Activated B cell treated with CpG ODN at 0.5 μM for 24 hours (primary cell): ENCODE measurements at regions of chr1 and their contacts with region 1.

Region 1: GRCh38 chr1:167499664-167500101 is 18.6 kb downstream of the CD247 start:
- DNase-seq: peak; percentile 31
- ATAC-seq: peak; percentile 96
- H3K4me3 Mint-ChIP-seq: peak overlapping the region; percentile 64
- H3K27ac Mint-ChIP-seq: peak overlapping the region; percentile 59
- H3K4me1 Mint-ChIP-seq: peaks cover 38% of the 10 kb centered on the region
- H3K27me3 Mint-ChIP-seq: peaks cover 67% of the 10 kb centered on the region
- CTCF ChIP-seq: no peak

Region 2: GRCh38 chr1:166796620-166797236 is 703.0 kb before region 1 on chr1:
- CTCF ChIA-PET with region 1: no interaction called
- POLR2A ChIA-PET with region 1: no interaction called
- intact Hi-C with region 1: no loop called
- DNase-seq: no peak
- ATAC-seq: no peak
- H3K4me3 Mint-ChIP-seq: no peak overlapping the region
- H3K27ac Mint-ChIP-seq: no peak overlapping the region
- H3K4me1 Mint-ChIP-seq: no peaks in the 10 kb centered on the region
- H3K27me3 Mint-ChIP-seq: peaks cover 19% of the 10 kb centered on the region
- CTCF ChIP-seq: no peak

Region 3: GRCh38 chr1:167207940-167208623 is 291.6 kb before region 1 on chr1:
- CTCF ChIA-PET with region 1: no interaction called
- POLR2A ChIA-PET with region 1: no interaction called
- intact Hi-C with region 1: no loop called
- DNase-seq: no peak
- ATAC-seq: no peak
- H3K4me3 Mint-ChIP-seq: no peak overlapping the region
- H3K27ac Mint-ChIP-seq: no peak overlapping the region
- H3K4me1 Mint-ChIP-seq: peaks cover 7% of the 10 kb centered on the region
- H3K27me3 Mint-ChIP-seq: no peaks in the 10 kb centered on the region
- CTCF ChIP-seq: no peak

Region 4: GRCh38 chr1:167430134-167430856 is 69.4 kb before region 1 on chr1:
- CTCF ChIA-PET with region 1: no interaction called
- POLR2A ChIA-PET with region 1: interaction called, 4 read pairs
- intact Hi-C with region 1: loop called (anchors 1 kb)
- DNase-seq: no peak
- ATAC-seq: peak; percentile 35
- H3K4me3 Mint-ChIP-seq: peak overlapping the region; percentile 61
- H3K27ac Mint-ChIP-seq: peak overlapping the region; percentile 90
- H3K4me1 Mint-ChIP-seq: peaks cover 53% of the 10 kb centered on the region
- H3K27me3 Mint-ChIP-seq: no peaks in the 10 kb centered on the region
- CTCF ChIP-seq: no peak

Region 5: GRCh38 chr1:167447521-167448136 is 52.1 kb before region 1 on chr1:
- CTCF ChIA-PET with region 1: no interaction called
- POLR2A ChIA-PET with region 1: no interaction called
- intact Hi-C with region 1: loop called (anchors 2 kb)
- DNase-seq: no peak
- ATAC-seq: peak; percentile 94
- H3K4me3 Mint-ChIP-seq: peak overlapping the region; percentile 61
- H3K27ac Mint-ChIP-seq: peak overlapping the region; percentile 70
- H3K4me1 Mint-ChIP-seq: peaks cover 25% of the 10 kb centered on the region
- H3K27me3 Mint-ChIP-seq: no peaks in the 10 kb centered on the region
- CTCF ChIP-seq: no peak

Region 6: GRCh38 chr1:167454894-167455785 is 44.5 kb before region 1 on chr1:
- CTCF ChIA-PET with region 1: interaction called, 3 read pairs
- POLR2A ChIA-PET with region 1: interaction called, 19 read pairs
- intact Hi-C with region 1: loop called (anchors 1 kb)
- DNase-seq: peak; percentile 60
- ATAC-seq: peak; percentile 76
- H3K4me3 Mint-ChIP-seq: peak overlapping the region; percentile 78
- H3K27ac Mint-ChIP-seq: no peak overlapping the region
- H3K4me1 Mint-ChIP-seq: peaks cover 18% of the 10 kb centered on the region
- H3K27me3 Mint-ChIP-seq: peaks cover 4% of the 10 kb centered on the region
- CTCF ChIP-seq: no peak

Region 7: GRCh38 chr1:167477986-167478385 is 21.7 kb before region 1 on chr1:
- CTCF ChIA-PET with region 1: no interaction called
- POLR2A ChIA-PET with region 1: no interaction called
- intact Hi-C with region 1: loop called (anchors 2 kb)
- DNase-seq: no peak
- ATAC-seq: no peak
- H3K4me3 Mint-ChIP-seq: no peak overlapping the region
- H3K27ac Mint-ChIP-seq: no peak overlapping the region
- H3K4me1 Mint-ChIP-seq: no peaks in the 10 kb centered on the region
- H3K27me3 Mint-ChIP-seq: peaks cover 27% of the 10 kb centered on the region
- CTCF ChIP-seq: no peak

Region 8: GRCh38 chr1:167553136-167554027 is 53.7 kb after region 1 on chr1 and contains the start of gene CREG1:
- CTCF ChIA-PET with region 1: interaction called, 3 read pairs
- POLR2A ChIA-PET with region 1: no interaction called
- intact Hi-C with region 1: loop called (anchors 1 kb)
- DNase-seq: peak; percentile 84
- ATAC-seq: peak; percentile 99
- H3K4me3 Mint-ChIP-seq: peak within 1 kb of the TSS; percentile 86
- H3K27ac Mint-ChIP-seq: peak within 1 kb of the TSS; percentile 41
- H3K4me1 Mint-ChIP-seq: peaks cover 19% of the 10 kb centered on the region
- H3K27me3 Mint-ChIP-seq: no peaks in the 10 kb centered on the region
- CTCF ChIP-seq: no peak
- total RNA-seq, gene CREG1: 3.1 and 3.8 TPM in 2 replicates

Region 9: DNA sequence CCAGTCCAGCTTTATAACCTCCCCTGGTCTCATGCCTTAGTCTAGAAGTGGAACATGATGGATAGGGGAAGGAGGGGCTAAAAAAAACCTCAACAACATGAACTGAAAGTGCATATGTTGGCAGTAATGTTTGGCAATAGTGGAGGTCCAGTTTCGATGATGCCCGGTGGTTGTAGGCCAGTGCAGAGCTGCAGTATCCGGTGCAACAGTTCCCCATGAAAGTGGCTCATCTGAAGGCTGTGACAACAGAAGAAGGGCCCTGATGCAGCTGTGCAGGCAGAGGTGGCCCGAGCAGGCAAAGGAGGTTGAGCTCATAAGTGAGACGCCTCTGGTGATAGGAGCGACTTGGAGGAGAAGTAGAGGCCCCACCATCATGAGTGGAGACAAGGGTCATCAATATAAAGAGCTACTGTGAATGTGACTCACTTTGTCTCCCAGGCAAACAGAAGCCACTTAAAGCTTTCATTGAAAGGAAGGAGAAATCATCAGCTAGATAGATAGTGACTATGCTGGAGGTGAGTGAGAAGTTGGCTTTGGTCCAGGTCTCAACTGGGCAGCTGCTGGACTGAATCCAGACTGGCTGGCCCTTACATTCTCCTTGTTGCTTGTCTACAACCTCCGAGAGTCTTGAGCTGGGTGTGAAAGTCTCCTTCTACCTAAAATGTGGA is 64.0 kb after region 1 on chr1:
- CTCF ChIA-PET with region 1: no interaction called
- POLR2A ChIA-PET with region 1: no interaction called
- intact Hi-C with region 1: no loop called
- DNase-seq: no peak
- ATAC-seq: no peak
- H3K4me3 Mint-ChIP-seq: no peak overlapping the region
- H3K27ac Mint-ChIP-seq: no peak overlapping the region
- H3K4me1 Mint-ChIP-seq: peaks cover 15% of the 10 kb centered on the region
- H3K27me3 Mint-ChIP-seq: no peaks in the 10 kb centered on the region
- CTCF ChIP-seq: no peak